Mammary epithelial cell (primary cell): ENCODE measurements at regions of chr14 and their contacts with region 1.

Region 1: DNA sequence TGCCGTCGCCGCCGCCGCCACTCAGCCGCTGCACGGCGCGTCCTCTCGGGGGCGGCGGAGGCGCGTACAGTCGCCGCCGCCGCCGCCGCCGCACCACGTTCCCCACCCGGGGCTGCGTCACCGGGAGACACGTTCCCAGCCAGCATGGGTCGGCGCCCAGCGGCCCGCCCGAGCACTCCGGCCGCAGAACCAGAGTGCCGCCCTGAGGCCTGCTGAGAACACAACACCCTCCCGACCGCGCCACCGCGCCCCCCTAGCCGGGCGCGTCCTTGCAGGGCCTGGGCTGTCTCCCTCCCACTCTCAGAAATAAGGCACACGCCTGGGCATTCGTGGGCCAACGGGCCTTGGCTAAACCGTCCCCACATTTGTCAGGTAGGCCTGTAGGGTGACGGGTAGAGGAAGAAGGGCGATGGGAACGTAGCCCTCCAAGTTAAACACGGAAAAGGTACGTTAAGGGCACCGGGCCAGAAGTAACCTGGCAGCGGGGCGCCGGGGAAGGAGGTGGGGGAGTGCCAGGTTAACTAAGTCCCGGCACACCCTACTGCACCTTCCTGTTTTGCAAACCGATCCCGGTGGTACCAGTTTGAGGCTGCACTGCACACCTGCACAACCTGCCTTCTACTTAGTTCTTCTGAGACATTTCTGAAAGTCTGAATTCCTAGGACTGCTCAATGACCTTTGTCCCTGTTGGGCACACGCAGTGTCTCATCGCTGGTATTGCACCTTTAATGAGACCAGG is at the start of gene MAP4K5:
- DNase-seq: peak; percentile 86
- H3K4me3 ChIP-seq: peak within 1 kb of the TSS; percentile 90 to 93 (median 92)
- H3K27ac ChIP-seq: peak within 1 kb of the TSS; percentile 86
- H3K4me1 ChIP-seq: peaks cover 42% of the 10 kb centered on the region
- H3K27me3 ChIP-seq: no peaks in the 10 kb centered on the region
- CTCF ChIP-seq: peak; percentile 73 to 89
- total RNA-seq, gene MAP4K5: 67.6 to 123 TPM

Region 2: DNA sequence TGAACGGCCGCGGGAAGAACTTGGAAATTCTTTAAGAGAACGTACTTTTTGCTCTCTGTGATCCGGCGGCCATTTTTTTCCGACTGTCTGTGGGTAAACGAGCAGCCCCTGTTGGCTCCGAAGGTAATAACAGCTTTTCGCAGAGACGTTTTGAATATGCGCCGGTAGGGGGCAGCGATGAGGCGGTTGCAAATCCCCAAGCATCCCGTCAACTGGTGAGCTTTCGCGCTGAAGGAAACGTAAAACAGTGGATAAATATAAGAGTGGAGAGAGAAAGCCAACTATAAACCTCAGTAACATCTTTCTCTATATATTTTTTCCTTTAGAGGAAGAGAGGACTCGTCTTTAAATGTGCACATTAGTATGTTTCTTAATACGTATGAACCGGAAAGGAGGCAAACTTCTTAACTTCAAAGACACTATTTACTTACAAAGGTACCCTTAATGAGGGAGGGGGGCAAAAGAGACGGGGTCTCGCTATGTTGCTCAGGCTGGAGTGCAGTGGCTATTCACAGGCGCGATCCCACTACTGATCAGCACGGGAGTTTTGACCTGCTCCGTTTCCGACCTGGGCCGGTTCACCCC is 670.5 kb before region 1 on chr14:
- CTCF ChIA-PET with region 1: no interaction called
- dilution Hi-C with region 1: no loop called
- in situ Hi-C with region 1: loop called in 1 of 2 experiments (anchors 25 kb)
- intact Hi-C with region 1: loop called (anchors 5 kb)
- DNase-seq: peak; percentile 79
- H3K4me3 ChIP-seq: peak overlapping the region; percentile 72 to 87 (median 82)
- H3K27ac ChIP-seq: peak overlapping the region; percentile 94
- H3K4me1 ChIP-seq: peaks cover 13% of the 10 kb centered on the region
- H3K27me3 ChIP-seq: no peaks in the 10 kb centered on the region
- CTCF ChIP-seq: peak; percentile 100

Region 3: GRCh38 chr14:50116181-50116956 is 416.3 kb before region 1 on chr14 and contains the start of gene VCPKMT:
- CTCF ChIA-PET with region 1: no interaction called
- dilution Hi-C with region 1: no loop called
- in situ Hi-C with region 1: no loop called
- intact Hi-C with region 1: loop called (anchors 5 kb)
- DNase-seq: peak; percentile 88
- H3K4me3 ChIP-seq: peak within 1 kb of the TSS; percentile 86 to 97 (median 87)
- H3K27ac ChIP-seq: peak within 1 kb of the TSS; percentile 91
- H3K4me1 ChIP-seq: peaks cover 10% of the 10 kb centered on the region
- H3K27me3 ChIP-seq: no peaks in the 10 kb centered on the region
- CTCF ChIP-seq: no peak
- total RNA-seq, gene VCPKMT: 7.5 to 8.1 TPM

Region 4: DNA sequence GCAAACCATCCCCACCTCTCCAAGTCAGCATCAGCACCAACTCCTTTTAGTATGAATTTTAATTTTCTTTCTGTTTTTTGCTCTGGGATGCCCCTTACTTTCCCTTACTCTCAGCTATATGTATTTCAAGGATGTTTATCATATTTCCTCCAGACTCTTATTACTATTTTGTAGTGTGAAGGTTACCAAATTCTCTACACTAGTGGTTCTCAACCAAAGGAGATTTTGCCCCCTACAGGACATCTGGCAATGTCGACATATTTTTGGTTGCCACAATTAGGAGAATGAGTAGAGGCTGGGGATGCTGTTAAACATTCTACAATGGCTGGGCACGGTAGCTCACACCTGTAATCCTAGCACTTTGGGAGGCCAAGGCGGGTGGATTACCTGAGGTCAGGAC is 272.2 kb before region 1 on chr14:
- CTCF ChIA-PET with region 1: no interaction called
- dilution Hi-C with region 1: no loop called
- in situ Hi-C with region 1: no loop called
- intact Hi-C with region 1: no loop called
- DNase-seq: peak; percentile 22
- H3K4me3 ChIP-seq: no peak overlapping the region
- H3K27ac ChIP-seq: no peak overlapping the region
- H3K4me1 ChIP-seq: no peaks in the 10 kb centered on the region
- H3K27me3 ChIP-seq: no peaks in the 10 kb centered on the region
- CTCF ChIP-seq: peak; percentile 42 to 54

Region 5: DNA sequence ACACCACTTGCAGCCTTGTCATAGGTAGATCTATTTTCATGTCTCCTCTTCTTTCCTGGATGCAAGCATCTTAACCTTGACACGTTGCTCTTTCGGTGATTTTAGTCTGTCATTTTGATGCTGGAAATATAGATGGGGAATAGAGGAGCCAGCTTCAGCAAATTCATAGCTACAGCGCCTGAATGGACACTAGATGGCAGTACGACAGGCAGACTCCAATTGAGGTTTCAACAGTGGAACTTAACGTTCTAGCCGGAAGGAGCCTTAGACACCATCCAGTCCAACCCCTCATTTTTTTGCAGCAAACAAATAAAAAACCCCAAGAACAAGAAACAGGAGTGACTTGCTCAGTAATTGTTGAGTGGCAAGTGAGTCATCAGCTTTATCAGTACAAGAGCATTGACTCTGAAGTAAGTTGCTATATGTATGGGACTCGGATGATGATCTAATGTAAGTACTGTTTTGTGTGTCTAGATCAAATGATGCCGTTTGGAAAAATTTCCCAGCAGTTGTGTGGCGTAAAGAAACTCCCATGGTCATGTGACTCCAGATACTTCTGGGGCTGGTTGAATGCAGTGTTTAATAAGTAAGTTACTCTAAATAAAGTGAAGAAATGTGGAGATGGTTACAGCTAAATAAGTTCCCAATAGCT is 211.5 kb before region 1 on chr14:
- CTCF ChIA-PET with region 1: interaction called, 8 read pairs
- dilution Hi-C with region 1: no loop called
- in situ Hi-C with region 1: loop called in 1 of 2 experiments (anchors 10 kb)
- intact Hi-C with region 1: loop called (anchors 1 kb)
- DNase-seq: peak; percentile 99
- H3K4me3 ChIP-seq: no peak overlapping the region
- H3K27ac ChIP-seq: peak overlapping the region; percentile 95
- H3K4me1 ChIP-seq: peaks cover 26% of the 10 kb centered on the region
- H3K27me3 ChIP-seq: no peaks in the 10 kb centered on the region
- CTCF ChIP-seq: peak; percentile 87 to 91

Region 6: DNA sequence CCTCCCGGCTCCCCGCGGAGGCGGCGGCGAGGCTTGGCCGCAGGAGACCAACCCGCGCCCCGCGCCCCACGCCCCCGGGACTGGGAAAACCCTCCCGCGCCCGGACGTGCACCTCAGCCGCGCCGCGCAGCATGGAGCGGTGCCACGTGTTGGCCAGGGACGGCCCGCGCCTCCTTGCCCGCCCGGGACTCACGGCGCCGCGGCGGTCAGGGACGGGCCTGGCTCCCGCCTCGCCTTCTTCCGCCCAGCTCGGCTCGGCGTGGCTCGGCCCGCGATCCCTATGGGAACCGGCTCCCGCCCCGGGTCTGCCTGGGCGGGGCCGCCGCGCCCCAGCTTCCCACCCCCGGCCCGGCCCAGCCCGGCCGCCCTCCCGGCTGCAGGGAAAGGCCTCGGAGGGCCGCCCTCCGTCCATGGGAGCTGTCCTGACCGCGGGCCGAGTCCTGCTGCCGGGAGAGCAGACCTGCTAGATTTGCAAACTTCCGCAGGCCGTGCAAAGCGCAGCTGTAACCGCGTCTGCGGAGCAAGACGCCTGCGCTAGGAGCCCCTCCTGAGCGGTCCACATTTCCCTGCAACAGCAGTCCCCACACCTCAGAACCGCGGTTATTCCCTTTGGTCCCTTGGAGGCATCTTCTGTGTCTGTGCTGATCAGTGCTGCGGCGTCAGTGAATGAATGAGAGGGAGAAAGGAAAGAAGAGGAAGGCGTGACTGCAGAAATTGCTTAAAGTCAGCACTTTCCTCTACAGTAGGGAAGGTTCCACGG is 135.9 kb before region 1 on chr14 and contains the start of gene CDKL1:
- CTCF ChIA-PET with region 1: no interaction called
- dilution Hi-C with region 1: no loop called
- in situ Hi-C with region 1: no loop called
- intact Hi-C with region 1: loop called (anchors 1 kb)
- DNase-seq: peak; percentile 76
- H3K4me3 ChIP-seq: peak within 1 kb of the TSS; percentile 60 to 67 (median 67)
- H3K27ac ChIP-seq: peak within 1 kb of the TSS; percentile 96
- H3K4me1 ChIP-seq: peaks cover 12% of the 10 kb centered on the region
- H3K27me3 ChIP-seq: no peaks in the 10 kb centered on the region
- CTCF ChIP-seq: no peak
- total RNA-seq, gene CDKL1: 13.7 to 14.1 TPM

Region 7: DNA sequence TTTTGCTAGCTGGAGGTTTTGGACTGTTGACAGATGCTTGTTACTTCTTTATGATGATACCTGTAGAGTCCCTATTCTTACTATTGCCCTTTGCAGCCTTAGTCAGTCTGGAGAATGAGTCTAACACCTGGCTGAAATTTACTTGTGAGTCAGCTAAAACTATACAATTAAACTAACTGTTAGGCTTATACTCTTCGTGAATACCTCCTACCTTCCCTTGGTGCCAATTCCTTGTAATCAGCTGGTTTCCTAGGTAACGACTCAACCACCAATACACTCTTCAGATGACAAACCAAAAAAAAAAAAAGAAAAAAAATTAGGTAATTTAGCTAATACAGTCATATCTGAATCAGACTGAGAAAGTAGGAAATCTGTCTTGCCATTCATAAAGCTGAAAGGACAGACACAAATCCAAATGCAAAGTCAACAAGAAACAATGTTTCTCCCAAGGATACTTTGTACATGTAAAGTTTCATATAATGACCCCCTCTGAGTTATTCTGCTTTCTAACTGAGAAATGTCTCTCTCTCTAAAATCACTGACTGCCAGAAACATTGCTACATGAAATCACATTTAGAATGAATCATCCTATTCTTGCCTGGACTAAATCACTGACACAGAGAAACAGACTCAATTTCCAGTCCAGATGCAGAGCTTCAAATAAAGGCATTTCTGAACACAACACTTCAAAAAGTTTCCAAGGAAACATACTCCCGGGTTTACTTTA is 79.5 kb before region 1 on chr14:
- CTCF ChIA-PET with region 1: no interaction called
- dilution Hi-C with region 1: no loop called
- in situ Hi-C with region 1: no loop called
- intact Hi-C with region 1: loop called (anchors 1 kb)
- DNase-seq: peak; percentile 98
- H3K4me3 ChIP-seq: no peak overlapping the region
- H3K27ac ChIP-seq: peak overlapping the region; percentile 95
- H3K4me1 ChIP-seq: peaks cover 16% of the 10 kb centered on the region
- H3K27me3 ChIP-seq: no peaks in the 10 kb centered on the region
- CTCF ChIP-seq: no peak